Naive thymus-derived CD4-positive, alpha-beta T cell (primary cell): ENCODE measurements at regions of chr1 and their contacts with region 1.

Region 1: DNA sequence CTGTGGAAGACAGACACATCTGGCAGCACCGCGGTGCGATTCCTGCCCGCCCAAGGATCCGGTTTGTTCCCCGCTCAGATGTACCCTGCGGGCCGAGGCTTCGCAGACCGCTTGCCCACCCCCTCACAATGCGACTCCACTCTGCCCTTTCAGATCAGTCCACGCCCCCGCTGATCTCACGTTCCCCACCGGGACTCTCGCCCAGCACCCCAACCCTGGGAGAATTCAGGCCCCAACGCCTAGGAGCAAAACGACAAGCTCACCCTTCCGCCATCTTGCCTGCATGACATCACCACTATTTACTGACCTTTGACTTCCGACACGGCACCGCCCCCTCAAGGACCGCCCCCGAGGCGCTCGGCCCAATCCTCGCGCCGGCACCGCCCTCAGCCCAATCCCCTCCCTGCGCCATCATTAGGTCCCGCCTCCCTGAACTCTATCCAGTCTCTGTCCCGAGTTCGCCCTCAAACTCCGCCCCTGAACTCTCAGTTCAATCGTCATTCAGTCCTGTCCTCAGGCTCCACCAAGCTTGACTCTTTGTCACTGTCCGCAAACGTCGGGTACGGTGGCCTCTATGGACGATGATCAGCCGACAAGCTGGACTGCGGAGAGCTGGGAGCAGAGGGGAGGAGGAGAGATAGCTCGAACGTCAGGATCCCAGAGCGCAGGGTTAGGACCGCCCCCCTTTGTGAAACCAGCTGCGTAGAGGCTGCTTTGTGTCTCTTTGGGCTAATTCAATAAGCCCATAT is at the start of gene BSDC1:
- DNase-seq: peak; percentile 94 to 99 (median 98)
- ATAC-seq: peak; percentile 99
- H3K4me3 ChIP-seq: peak within 1 kb of the TSS; percentile 90
- H3K4me3 Mint-ChIP-seq: peak within 1 kb of the TSS in 9 of 10 donors; percentile 92 to 100 (median 99)
- H3K27ac ChIP-seq: peak within 1 kb of the TSS; percentile 95
- H3K27ac Mint-ChIP-seq: peak within 1 kb of the TSS; percentile 94 to 100 (median 98)
- H3K4me1 ChIP-seq: peaks cover 15 to 30% of the 10 kb centered on the region in 2 donors
- H3K4me1 Mint-ChIP-seq: peaks cover 4 to 40% (median 23%) of the 10 kb centered on the region in 7 donors
- H3K27me3 ChIP-seq: no peaks in the 10 kb centered on the region
- H3K27me3 Mint-ChIP-seq: peaks cover 0 to 19% (median 0%) of the 10 kb centered on the region in 5 donors
- total RNA-seq, gene BSDC1: 51.7 to 186 (median 121) TPM

Region 2: DNA sequence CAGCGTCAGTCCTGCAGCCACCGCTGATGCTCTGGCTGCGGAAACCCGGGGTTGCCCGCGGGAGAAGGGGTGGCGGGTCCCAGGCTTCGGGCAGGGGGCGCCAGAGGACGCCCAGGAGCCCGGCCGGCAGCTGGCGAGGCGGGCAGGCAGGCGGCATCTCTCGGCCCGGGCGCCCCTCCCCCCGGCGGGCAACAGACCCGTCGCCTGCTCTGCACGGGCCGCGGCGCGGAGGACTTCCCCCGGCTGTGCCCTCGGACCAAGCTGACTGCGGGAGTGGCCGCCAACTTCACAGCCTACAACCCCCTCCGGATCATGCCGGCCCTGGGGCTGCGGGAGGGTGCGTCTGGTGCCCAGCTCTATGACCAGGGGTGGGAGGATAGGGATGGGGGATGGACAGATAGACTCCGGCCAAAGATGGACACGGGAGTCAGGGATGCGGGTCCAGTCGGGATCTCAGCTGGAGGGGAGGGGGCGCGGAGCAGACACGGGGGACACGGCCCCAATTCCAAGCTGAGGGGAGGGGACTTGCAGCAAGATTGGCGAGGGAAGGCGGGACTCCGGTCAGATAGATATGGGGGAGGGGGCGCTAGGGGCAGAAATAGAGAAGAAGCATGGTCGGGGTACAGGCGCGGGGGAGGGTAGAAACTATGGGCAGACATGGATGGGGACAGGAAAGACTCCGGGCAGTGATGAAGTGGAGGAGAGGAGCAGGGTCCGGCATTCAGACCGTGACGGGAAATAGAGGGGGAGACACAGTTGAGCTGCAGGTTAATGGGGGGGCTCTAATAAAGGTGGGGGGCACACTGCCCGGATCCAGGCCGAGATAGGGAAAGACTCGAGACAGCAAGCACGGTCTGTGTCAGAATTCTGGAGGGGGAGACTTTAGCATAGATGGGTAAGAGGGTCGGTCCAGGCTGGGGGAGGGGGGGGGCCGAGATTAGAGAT is 631.3 kb before region 1 on chr1:
- CTCF ChIA-PET with region 1: no interaction called
- POLR2A ChIA-PET with region 1: no interaction called
- intact Hi-C with region 1: loop called in 1 of 2 experiments (anchors 10 kb)
- DNase-seq: peak; percentile 51 to 81 (median 67)
- ATAC-seq: peak; percentile 64
- H3K4me3 ChIP-seq: peak overlapping the region; percentile 48
- H3K4me3 Mint-ChIP-seq: peak overlapping the region; percentile 71 to 89 (median 82)
- H3K27ac ChIP-seq: no peak overlapping the region
- H3K27ac Mint-ChIP-seq: no peak overlapping the region
- H3K4me1 ChIP-seq: peaks cover 23 to 32% of the 10 kb centered on the region in 2 donors
- H3K4me1 Mint-ChIP-seq: peaks cover 6 to 32% (median 26%) of the 10 kb centered on the region in 7 donors
- H3K27me3 ChIP-seq: no peaks in the 10 kb centered on the region
- H3K27me3 Mint-ChIP-seq: peaks cover 0 to 79% (median 4%) of the 10 kb centered on the region in 5 donors

Region 3: DNA sequence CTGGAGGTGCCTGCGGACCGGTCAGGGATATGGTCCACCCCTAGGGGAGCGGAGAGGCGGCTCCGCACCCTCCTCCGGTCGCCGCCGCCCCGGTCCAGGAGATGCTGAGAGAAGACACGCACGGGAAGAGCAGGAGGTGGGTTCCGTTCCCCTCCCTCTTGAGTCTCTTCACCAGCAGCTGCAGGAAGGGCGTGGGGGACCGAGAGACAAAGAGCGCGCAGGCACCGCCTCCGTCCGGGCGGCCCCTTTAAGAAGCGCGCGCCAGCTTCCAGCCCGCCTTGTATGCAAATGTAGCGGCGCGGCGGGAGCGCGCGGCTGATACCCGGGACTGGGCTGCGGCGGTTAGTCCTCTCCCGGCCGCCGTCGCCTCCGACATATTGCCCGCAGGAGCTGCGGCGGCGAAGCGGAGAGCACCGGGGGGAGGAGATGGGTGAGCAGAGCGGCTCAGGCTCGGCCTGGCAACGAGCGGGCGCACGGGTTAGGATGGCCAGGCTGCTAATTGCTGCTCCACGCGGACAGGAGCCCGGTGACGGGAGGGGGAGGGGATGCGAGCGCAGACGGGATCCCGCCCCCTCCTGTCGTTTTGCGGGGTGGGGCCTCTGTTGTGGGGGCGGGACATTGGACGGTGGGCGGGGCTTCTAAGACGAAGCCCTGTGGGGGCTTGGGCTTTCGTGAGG is 321.6 kb before region 1 on chr1 and contains the start of gene TMEM39B:
- CTCF ChIA-PET with region 1: no interaction called
- POLR2A ChIA-PET with region 1: interaction called, 8 read pairs
- intact Hi-C with region 1: loop called (anchors 1 kb)
- DNase-seq: peak; percentile 90 to 97 (median 96)
- ATAC-seq: peak; percentile 92
- H3K4me3 ChIP-seq: peak within 1 kb of the TSS; percentile 98
- H3K4me3 Mint-ChIP-seq: peak within 1 kb of the TSS; percentile 83 to 94 (median 91)
- H3K27ac ChIP-seq: peak within 1 kb of the TSS; percentile 82
- H3K27ac Mint-ChIP-seq: peak within 1 kb of the TSS; percentile 84 to 95 (median 92)
- H3K4me1 ChIP-seq: peaks cover 5 to 16% of the 10 kb centered on the region in 2 donors
- H3K4me1 Mint-ChIP-seq: peaks cover 21 to 58% (median 47%) of the 10 kb centered on the region in 7 donors
- H3K27me3 ChIP-seq: no peaks in the 10 kb centered on the region
- H3K27me3 Mint-ChIP-seq: no peaks in the 10 kb centered on the region
- total RNA-seq, gene TMEM39B: 11.4 to 35.9 (median 26.4) TPM

Region 4: DNA sequence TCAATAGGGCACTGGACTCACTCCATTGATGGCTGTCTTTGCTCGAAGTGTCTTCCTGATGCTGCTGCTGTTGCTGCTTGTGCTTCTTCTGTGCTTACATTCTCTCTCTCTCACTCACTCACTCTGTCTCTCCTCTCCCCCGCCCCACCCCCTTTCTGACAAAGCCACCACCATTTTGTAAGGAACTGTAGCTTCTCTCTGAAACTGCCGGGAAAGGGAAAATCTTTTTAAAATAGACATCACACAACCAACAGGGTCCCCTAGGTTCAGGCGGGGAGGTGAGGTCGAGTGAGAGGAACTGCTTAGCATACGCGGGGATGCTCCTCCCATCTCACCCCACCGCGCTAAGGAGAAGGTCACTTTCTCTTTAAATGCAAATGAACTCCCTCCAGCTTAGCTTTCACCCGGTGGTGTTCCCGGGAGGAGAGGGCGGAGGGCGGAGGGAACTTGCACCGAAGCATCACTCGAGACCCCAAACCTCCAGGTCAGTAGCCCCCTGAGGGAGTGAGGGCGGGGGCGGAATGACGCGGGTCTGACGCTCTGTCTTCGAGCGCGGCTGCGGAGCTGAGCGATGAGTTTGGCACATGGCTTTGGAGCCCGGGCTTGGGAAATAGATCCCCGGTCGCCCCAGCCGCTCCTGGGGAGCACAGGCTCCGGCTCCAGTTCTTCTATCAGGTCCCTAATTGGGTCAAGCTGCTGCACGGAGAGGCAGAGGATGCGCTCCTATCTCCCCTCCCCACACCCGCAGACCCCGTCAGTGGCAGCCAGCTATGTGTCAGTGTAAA is 193.9 kb before region 1 on chr1 and contains the start of gene CCDC28B:
- CTCF ChIA-PET with region 1: no interaction called
- POLR2A ChIA-PET with region 1: interaction called, 9 read pairs
- intact Hi-C with region 1: loop called (anchors 1 to 5 kb)
- DNase-seq: peak; percentile 35 to 71 (median 62)
- ATAC-seq: peak; percentile 59
- H3K4me3 ChIP-seq: peak within 1 kb of the TSS; percentile 96
- H3K4me3 Mint-ChIP-seq: peak within 1 kb of the TSS; percentile 78 to 99 (median 94)
- H3K27ac ChIP-seq: peak within 1 kb of the TSS; percentile 99
- H3K27ac Mint-ChIP-seq: peak within 1 kb of the TSS; percentile 72 to 98 (median 91)
- H3K4me1 ChIP-seq: peaks cover 32 to 35% of the 10 kb centered on the region in 2 donors
- H3K4me1 Mint-ChIP-seq: peaks cover 41 to 73% (median 60%) of the 10 kb centered on the region in 7 donors
- H3K27me3 ChIP-seq: no peaks in the 10 kb centered on the region
- H3K27me3 Mint-ChIP-seq: no peaks in the 10 kb centered on the region
- total RNA-seq, gene CCDC28B: 6.2 to 39.0 (median 8.7) TPM

Region 5: GRCh38 chr1:32247983-32248889 is 146.1 kb before region 1 on chr1:
- CTCF ChIA-PET with region 1: no interaction called
- POLR2A ChIA-PET with region 1: interaction called, 17 read pairs
- intact Hi-C with region 1: loop called in 1 of 2 experiments (anchors 1 kb)
- DNase-seq: peak; percentile 43 to 84 (median 56)
- ATAC-seq: peak; percentile 45
- H3K4me3 ChIP-seq: peak overlapping the region; percentile 52
- H3K4me3 Mint-ChIP-seq: peak overlapping the region; percentile 66 to 100 (median 98)
- H3K27ac ChIP-seq: peak overlapping the region; percentile 91
- H3K27ac Mint-ChIP-seq: peak overlapping the region; percentile 92 to 100 (median 99)
- H3K4me1 ChIP-seq: peaks cover 37 to 51% of the 10 kb centered on the region in 2 donors
- H3K4me1 Mint-ChIP-seq: peaks cover 32 to 60% (median 52%) of the 10 kb centered on the region in 7 donors
- H3K27me3 ChIP-seq: no peaks in the 10 kb centered on the region
- H3K27me3 Mint-ChIP-seq: peaks cover 0 to 2% (median 0%) of the 10 kb centered on the region in 5 donors

Region 6: DNA sequence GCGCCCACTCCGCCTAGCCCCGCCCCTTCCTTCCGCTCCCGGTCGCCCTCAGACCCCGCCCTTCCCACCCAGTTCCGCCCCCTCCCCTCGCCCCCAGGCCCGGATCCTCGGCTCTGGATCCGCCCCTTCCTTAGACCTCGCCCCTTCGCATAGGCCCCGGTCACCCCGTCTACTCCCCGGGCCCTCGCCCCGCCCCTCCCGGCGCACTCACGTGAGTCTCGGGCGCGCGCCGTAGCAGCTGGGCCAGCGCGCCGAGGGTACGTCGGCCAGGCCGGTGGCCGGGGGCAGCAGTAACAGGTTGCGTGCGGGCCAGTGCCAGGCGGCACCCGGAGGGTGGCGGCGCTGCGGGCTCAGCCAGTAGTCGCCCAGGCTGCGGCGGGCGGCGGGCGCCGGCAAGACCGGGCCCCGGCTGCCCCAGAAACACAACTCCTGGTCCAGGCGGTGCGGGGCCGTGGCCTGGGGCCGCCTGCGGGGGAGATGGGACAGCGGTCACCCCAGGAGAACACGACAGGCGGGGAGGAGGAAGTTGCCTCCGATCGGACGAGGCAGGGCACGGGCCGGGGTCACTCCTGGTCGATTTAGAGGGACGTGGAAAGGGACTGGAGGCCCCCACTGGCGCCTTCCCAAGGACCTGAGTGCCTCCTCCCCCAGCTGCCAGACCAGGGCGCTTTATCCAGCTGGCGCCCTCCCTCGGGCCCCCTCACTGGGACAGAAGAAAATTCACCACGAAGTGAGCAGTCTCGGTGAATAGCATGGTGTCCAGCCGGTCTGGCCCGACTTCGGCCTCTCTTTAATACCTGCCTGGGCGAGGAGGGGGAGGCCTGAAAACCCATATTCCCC is 42.7 kb before region 1 on chr1:
- CTCF ChIA-PET with region 1: interaction called, 4 read pairs
- POLR2A ChIA-PET with region 1: interaction called, 11 read pairs
- intact Hi-C with region 1: loop called (anchors 1 kb)
- DNase-seq: peak; percentile 83 to 93 (median 92)
- ATAC-seq: peak; percentile 97
- H3K4me3 ChIP-seq: peak overlapping the region; percentile 62
- H3K4me3 Mint-ChIP-seq: peak overlapping the region; percentile 68 to 90 (median 85)
- H3K27ac ChIP-seq: peak overlapping the region; percentile 75
- H3K27ac Mint-ChIP-seq: peak overlapping the region; percentile 63 to 96 (median 91)
- H3K4me1 ChIP-seq: peaks cover 4 to 19% of the 10 kb centered on the region in 2 donors
- H3K4me1 Mint-ChIP-seq: peaks cover 35 to 65% (median 53%) of the 10 kb centered on the region in 7 donors
- H3K27me3 ChIP-seq: no peaks in the 10 kb centered on the region
- H3K27me3 Mint-ChIP-seq: peaks cover 0 to under 1% (median 0%) of the 10 kb centered on the region in 5 donors